ENCODE measurements at regions of chr5 and their contacts with region 1.

Region 1: DNA sequence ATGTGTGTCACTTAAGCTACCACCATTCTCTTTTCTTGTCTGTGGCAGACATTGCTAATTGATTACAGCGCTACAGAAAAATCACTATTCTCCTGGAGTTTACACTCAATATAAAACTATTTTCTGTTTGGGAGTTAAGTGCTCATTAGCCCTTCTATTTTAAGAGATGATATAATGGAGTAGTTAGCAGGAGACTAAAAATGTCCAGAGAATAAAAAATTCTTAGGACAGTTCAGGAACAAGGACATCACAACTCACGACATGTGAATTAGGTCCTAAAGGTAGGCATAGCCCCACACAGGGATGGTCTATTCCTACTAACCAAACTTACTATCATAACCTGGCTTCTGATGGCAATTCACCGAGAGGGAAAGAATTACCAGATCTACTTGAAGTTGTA is 258.5 kb downstream of the KIAA0825 start:
- DNase-seq: no peak
- ATAC-seq: no peak
- H3K4me3 ChIP-seq: no peak overlapping the region
- H3K27ac ChIP-seq: no peak overlapping the region
- H3K4me1 ChIP-seq: 0 out of 4 replicates have a peak, but pooled peaks cover 0 to 6% of the 10 kb centered on the region in 2 experiments
- H3K27me3 ChIP-seq: no peaks in the 10 kb centered on the region
- CTCF ChIP-seq: no peak
- POLR2A ChIP-seq: no peak
- RAD21 ChIP-seq: no peak

Region 2: DNA sequence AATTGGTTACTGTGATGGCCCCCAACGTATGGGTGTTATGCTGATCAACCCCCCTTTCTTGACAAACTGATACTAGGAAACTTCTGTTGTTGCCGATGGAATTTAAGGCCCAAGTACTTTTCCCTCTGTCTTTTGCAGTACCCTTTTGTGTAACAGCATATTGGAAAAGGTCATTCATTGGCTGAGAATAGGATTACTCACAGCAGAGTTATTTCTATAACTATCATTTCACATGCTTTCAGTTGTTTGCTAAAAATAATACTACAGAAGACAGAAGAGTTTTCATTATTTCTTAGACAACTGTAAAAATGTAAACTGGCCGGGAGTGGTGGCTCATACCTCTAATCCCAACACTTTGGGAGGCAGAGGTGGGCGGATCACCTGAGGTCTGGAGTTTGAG is 70.9 kb before region 1 on chr5:
- CTCF ChIA-PET with region 1: no interaction called
- POLR2A ChIA-PET with region 1: no interaction called
- RAD21 ChIA-PET with region 1: no interaction called
- intact Hi-C with region 1: loop called (anchors 10 kb)
- DNase-seq: no peak
- ATAC-seq: no peak
- H3K4me3 ChIP-seq: no peak overlapping the region
- H3K27ac ChIP-seq: no peak overlapping the region
- H3K4me1 ChIP-seq: no peaks in the 10 kb centered on the region
- H3K27me3 ChIP-seq: no peaks in the 10 kb centered on the region
- CTCF ChIP-seq: no peak
- POLR2A ChIP-seq: no peak
- RAD21 ChIP-seq: no peak

Region 3: GRCh38 chr5:94715671-94716211 is 355.9 kb after region 1 on chr5:
- CTCF ChIA-PET with region 1: no interaction called
- POLR2A ChIA-PET with region 1: no interaction called
- RAD21 ChIA-PET with region 1: no interaction called
- intact Hi-C with region 1: no loop called
- DNase-seq: no peak
- ATAC-seq: no peak
- H3K4me3 ChIP-seq: no peak overlapping the region
- H3K27ac ChIP-seq: no peak overlapping the region
- H3K4me1 ChIP-seq: no peaks in the 10 kb centered on the region
- H3K27me3 ChIP-seq: no peaks in the 10 kb centered on the region
- CTCF ChIP-seq: no peak
- POLR2A ChIP-seq: no peak
- RAD21 ChIP-seq: no peak